ENCODE measurements at regions of chr5 and their contacts with region 1.

Region 1: DNA sequence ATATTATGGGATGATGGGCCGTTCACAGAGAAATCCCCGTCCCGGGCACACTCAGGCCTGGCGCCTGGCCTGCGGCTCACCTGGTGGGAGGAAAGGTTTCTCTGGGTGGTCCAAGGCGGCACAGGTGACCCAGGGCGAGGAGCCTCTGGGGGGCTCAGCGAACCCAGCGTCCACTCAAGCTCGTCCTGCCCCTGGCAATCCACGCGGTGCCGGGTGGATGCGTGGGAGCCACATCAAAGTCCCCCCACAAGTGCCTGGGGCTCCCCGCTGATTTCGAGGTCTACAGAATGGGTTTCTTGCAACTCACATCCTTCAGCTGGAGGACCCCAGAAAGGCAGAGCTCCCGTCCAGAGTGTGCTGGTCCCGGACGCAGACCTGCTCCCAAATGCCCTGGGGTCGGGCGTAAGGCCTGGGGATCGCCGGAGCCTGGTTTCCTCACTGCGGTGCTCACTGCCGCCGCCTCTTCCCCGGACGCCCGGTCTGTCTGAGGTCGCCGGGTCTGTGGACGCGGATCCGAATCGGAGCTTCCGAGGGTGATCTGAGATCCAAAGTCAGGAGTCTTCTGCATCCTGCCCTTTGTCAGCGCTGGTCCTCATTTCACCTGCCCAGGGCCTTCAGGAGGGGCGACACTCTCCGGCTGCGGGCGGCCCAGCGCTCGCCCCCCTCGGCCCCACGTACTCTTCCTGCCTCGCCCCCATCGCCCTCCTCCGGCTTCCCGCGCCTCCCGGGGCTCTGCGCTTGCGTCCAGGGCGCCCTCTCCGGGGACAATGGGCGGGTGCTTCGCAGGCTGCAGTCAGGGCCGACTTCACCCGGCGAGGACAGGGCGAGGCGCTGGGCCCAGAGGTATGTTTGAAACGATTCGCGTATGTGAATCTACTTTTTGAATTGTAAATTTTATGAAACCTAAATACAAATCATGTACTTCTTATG is 20.0 kb upstream of the RUFY1 start:
- DNase-seq: peak; percentile 54 to 83 (median 68)
- ATAC-seq: peak; percentile 89 to 97
- H3K4me3 Mint-ChIP-seq: peak overlapping the region; percentile 66 to 85 (median 78)
- H3K27ac Mint-ChIP-seq: peak overlapping the region in 7 of 10 donors; percentile 29 to 82 (median 60)
- H3K4me1 Mint-ChIP-seq: peaks cover 3 to 31% (median 19%) of the 10 kb centered on the region in 4 donors
- H3K27me3 Mint-ChIP-seq: no peaks in the 10 kb centered on the region

Region 2: GRCh38 chr5:179550511-179551230 is 20.3 kb after region 1 on chr5 and contains the start of gene RUFY1:
- POLR2A ChIA-PET with region 1: interaction called, 22 read pairs
- DNase-seq: peak; percentile 63 to 96 (median 84)
- ATAC-seq: peak; percentile 80 to 83
- H3K4me3 Mint-ChIP-seq: peak within 1 kb of the TSS; percentile 94 to 98 (median 97)
- H3K27ac Mint-ChIP-seq: peak within 1 kb of the TSS; percentile 94 to 98 (median 96)
- H3K4me1 Mint-ChIP-seq: peaks cover 8 to 51% (median 30%) of the 10 kb centered on the region in 4 donors
- H3K27me3 Mint-ChIP-seq: no peaks in the 10 kb centered on the region
- polyA plus RNA-seq, gene RUFY1: 27.9 to 35.3 (median 30.5) TPM

Region 3: GRCh38 chr5:179599975-179600391 is 69.6 kb after region 1 on chr5:
- POLR2A ChIA-PET with region 1: no interaction called
- DNase-seq: no peak
- ATAC-seq: no peak
- H3K4me3 Mint-ChIP-seq: no peak overlapping the region
- H3K27ac Mint-ChIP-seq: peak overlapping the region in 1 of 10 donors; percentile 14
- H3K4me1 Mint-ChIP-seq: peaks cover 0 to 2% (median 0%) of the 10 kb centered on the region in 4 donors
- H3K27me3 Mint-ChIP-seq: no peaks in the 10 kb centered on the region

Measured in naive thymus-derived CD8-positive, alpha-beta T cell (primary cell).